Dendritic cell treated with granulocyte-macrophage colony-stimulating factor and Interleukin-4, amounts not matched to agents 40 ng/mL and 50 ng/mL, for 4 days (primary cell): ENCODE measurements at regions of chr18 and their contacts with region 1.

Region 1: DNA sequence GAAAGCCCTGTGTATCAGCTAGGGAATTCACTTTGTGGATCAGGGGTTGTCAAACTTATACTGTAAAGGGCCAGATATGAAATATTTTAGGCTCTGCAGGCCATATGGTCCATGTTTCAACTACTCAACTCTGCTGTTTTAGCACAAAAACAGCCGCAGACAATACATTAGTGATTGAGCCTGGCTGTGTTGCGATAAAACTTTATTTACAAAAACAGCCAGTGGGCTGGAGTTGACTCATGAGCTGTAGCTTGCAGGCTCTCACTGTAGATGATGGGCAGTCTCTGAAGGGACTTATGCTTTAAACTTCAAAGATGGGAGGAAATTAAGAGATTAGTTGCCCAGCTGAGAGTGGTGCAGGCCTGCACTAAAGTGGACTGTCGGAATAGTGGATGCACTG is 33.1 kb downstream of the WDR7 start:
- H3K4me3 Mint-ChIP-seq: no peak overlapping the region
- H3K27ac Mint-ChIP-seq: no peak overlapping the region
- H3K4me1 Mint-ChIP-seq: no peaks in the 10 kb centered on the region
- H3K27me3 Mint-ChIP-seq: no peaks in the 10 kb centered on the region

Region 2: GRCh38 chr18:56756966-56757365 is 72.7 kb after region 1 on chr18:
- intact Hi-C with region 1: loop called (anchors 10 kb)
- H3K4me3 Mint-ChIP-seq: no peak overlapping the region
- H3K27ac Mint-ChIP-seq: no peak overlapping the region
- H3K4me1 Mint-ChIP-seq: peaks cover 7% of the 10 kb centered on the region
- H3K27me3 Mint-ChIP-seq: no peaks in the 10 kb centered on the region